CD8-positive, alpha-beta T cell (primary cell): ENCODE measurements at regions of chr6 and their contacts with region 1.

Region 1: DNA sequence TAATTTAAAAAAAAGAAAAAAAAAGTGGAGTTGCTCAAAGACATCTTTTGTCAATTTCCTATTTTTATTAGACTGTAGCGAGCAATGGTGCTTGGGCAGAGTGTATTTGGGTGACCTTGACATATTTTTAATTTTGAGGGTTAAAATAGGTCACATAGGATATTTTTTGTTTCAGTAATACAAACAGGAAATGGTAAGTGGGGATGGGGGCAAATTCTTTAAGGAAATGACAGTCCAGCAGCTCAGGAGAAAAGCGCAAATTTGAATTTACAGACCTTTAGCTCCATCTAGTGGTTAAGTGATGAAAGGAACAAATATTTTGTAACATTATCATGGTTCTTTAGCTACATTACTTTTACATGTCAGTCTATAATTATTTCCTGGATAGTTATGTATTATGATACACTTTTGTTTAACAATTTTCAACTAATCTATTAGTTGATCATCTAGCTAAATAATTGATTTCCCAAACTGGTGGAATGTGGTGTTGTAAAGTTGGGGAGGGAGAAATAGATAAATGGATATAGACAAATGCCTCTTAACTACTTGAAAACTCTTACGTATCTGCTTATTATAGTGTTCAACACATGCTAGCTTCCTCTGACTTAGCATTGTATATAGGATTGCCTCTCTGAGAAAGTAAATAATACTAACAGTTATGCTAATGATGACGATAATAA is 10.0 kb downstream of the CITED2 start:
- DNase-seq: peak in 2 of 9 experiments; percentile 64 to 74
- ATAC-seq: peak; percentile 63
- H3K4me3 ChIP-seq: no peak overlapping the region
- H3K4me3 Mint-ChIP-seq: no peak overlapping the region
- H3K27ac ChIP-seq: no peak overlapping the region
- H3K27ac Mint-ChIP-seq: no peak overlapping the region
- H3K4me1 ChIP-seq: peaks cover 4% of the 10 kb centered on the region
- H3K4me1 Mint-ChIP-seq: peaks cover 46% of the 10 kb centered on the region
- H3K27me3 ChIP-seq: no peaks in the 10 kb centered on the region
- H3K27me3 Mint-ChIP-seq: no peaks in the 10 kb centered on the region
- CTCF ChIP-seq: peak; percentile 97

Region 2: DNA sequence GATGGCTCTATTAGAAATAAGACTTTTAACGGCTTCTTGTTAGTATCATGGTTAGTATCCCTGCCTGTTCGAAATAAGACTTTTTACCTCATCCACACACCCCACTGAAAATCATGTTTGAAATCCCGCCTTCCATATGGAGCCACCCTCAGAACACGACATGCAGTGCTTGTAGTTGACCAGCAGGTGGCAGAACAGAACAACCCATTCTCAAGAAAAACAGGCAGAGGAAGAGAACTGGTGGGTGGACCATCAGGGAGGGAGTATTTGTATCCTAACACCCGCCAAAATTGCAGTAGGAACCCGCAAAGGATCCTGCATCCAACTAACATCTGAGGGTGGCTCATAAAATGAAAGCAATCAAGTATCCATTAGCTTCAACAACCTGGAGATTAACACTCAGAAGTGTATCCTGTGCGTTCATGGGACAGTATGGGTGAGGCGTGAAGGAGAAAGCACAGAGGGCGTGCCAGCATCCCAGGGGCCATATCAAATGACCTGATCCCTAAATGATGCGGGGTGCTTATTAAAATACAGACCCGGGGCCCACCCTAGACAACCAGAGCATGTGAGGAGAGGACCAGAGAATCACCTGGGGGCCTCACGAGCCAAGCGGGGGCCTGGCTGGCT is 775.5 kb before region 1 on chr6:
- CTCF ChIA-PET with region 1: interaction called, 9 read pairs
- POLR2A ChIA-PET with region 1: no interaction called
- intact Hi-C with region 1: loop called in 1 of 2 experiments (anchors 5 kb)
- DNase-seq: peak in 8 of 9 experiments; percentile 24 to 74 (median 50)
- ATAC-seq: peak; percentile 67
- H3K4me3 ChIP-seq: no peak overlapping the region
- H3K4me3 Mint-ChIP-seq: no peak overlapping the region
- H3K27ac ChIP-seq: no peak overlapping the region
- H3K27ac Mint-ChIP-seq: no peak overlapping the region
- H3K4me1 ChIP-seq: peaks cover 10% of the 10 kb centered on the region
- H3K4me1 Mint-ChIP-seq: peaks cover 19% of the 10 kb centered on the region
- H3K27me3 ChIP-seq: no peaks in the 10 kb centered on the region
- H3K27me3 Mint-ChIP-seq: no peaks in the 10 kb centered on the region
- CTCF ChIP-seq: peak; percentile 93

Region 3: GRCh38 chr6:138923561-138923960 is 440.9 kb before region 1 on chr6:
- CTCF ChIA-PET with region 1: no interaction called
- POLR2A ChIA-PET with region 1: no interaction called
- intact Hi-C with region 1: loop called in 1 of 2 experiments (anchors 10 kb)
- DNase-seq: no peak
- ATAC-seq: no peak
- H3K4me3 ChIP-seq: no peak overlapping the region
- H3K4me3 Mint-ChIP-seq: no peak overlapping the region
- H3K27ac ChIP-seq: no peak overlapping the region
- H3K27ac Mint-ChIP-seq: no peak overlapping the region
- H3K4me1 ChIP-seq: no peaks in the 10 kb centered on the region
- H3K4me1 Mint-ChIP-seq: peaks cover 3% of the 10 kb centered on the region
- H3K27me3 ChIP-seq: no peaks in the 10 kb centered on the region
- H3K27me3 Mint-ChIP-seq: no peaks in the 10 kb centered on the region
- CTCF ChIP-seq: no peak

Region 4: GRCh38 chr6:139134817-139135581 is 229.4 kb before region 1 on chr6 and contains the start of gene HECA:
- CTCF ChIA-PET with region 1: interaction called, 16 read pairs
- POLR2A ChIA-PET with region 1: interaction called, 5 read pairs
- intact Hi-C with region 1: no loop called
- DNase-seq: peak; percentile 98 to 100 (median 99)
- ATAC-seq: peak; percentile 81
- H3K4me3 ChIP-seq: peak within 1 kb of the TSS; percentile 79 to 84
- H3K4me3 Mint-ChIP-seq: peak within 1 kb of the TSS; percentile 91
- H3K27ac ChIP-seq: peak within 1 kb of the TSS; percentile 96 to 97
- H3K27ac Mint-ChIP-seq: peak within 1 kb of the TSS; percentile 98
- H3K4me1 ChIP-seq: peaks cover 55% of the 10 kb centered on the region
- H3K4me1 Mint-ChIP-seq: peaks cover 67% of the 10 kb centered on the region
- H3K27me3 ChIP-seq: no peaks in the 10 kb centered on the region
- H3K27me3 Mint-ChIP-seq: no peaks in the 10 kb centered on the region
- CTCF ChIP-seq: no peak
- total RNA-seq, gene HECA: 231 to 234 TPM

Region 5: DNA sequence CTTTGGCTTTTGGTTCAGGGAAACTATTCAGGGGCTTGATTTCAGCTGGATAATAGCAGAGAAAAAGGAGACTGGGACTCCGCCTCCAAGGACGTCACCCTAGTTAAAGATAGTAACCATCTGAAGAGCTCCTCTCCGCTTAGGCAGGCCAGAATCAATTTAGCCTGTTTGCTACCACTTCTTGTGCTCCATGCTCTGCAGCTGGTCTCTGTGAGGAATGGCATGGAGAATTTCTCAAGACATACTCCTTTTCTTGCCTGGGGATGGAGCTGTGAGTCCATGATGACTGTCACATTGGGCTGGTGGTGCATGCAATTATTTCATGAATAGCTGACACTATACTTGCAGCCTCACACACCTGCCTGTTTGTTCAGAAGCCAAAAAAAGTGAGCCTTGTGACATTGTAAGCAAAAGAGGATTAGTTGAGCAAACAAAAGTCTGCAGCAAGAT is 134.0 kb before region 1 on chr6:
- CTCF ChIA-PET with region 1: interaction called, 21 read pairs
- POLR2A ChIA-PET with region 1: interaction called, 3 read pairs
- intact Hi-C with region 1: no loop called
- DNase-seq: peak in 2 of 9 experiments; percentile 17 to 27
- ATAC-seq: no peak
- H3K4me3 ChIP-seq: no peak overlapping the region
- H3K4me3 Mint-ChIP-seq: no peak overlapping the region
- H3K27ac ChIP-seq: no peak overlapping the region
- H3K27ac Mint-ChIP-seq: peak overlapping the region; percentile 10
- H3K4me1 ChIP-seq: no peaks in the 10 kb centered on the region
- H3K4me1 Mint-ChIP-seq: peaks cover 9% of the 10 kb centered on the region
- H3K27me3 ChIP-seq: no peaks in the 10 kb centered on the region
- H3K27me3 Mint-ChIP-seq: no peaks in the 10 kb centered on the region
- CTCF ChIP-seq: no peak

Region 6: GRCh38 chr6:139291813-139292619 is 72.4 kb before region 1 on chr6 and contains the start of gene TXLNB:
- CTCF ChIA-PET with region 1: interaction called, 20 read pairs
- POLR2A ChIA-PET with region 1: interaction called, 6 read pairs
- intact Hi-C with region 1: loop called (anchors 1 to 5 kb)
- DNase-seq: peak; percentile 55 to 92 (median 80)
- ATAC-seq: peak; percentile 85
- H3K4me3 ChIP-seq: peak within 1 kb of the TSS; percentile 16 to 34
- H3K4me3 Mint-ChIP-seq: peak within 1 kb of the TSS; percentile 77
- H3K27ac ChIP-seq: peak within 1 kb of the TSS; percentile 77 to 82
- H3K27ac Mint-ChIP-seq: peak within 1 kb of the TSS; percentile 96
- H3K4me1 ChIP-seq: peaks cover 39% of the 10 kb centered on the region
- H3K4me1 Mint-ChIP-seq: peaks cover 66% of the 10 kb centered on the region
- H3K27me3 ChIP-seq: no peaks in the 10 kb centered on the region
- H3K27me3 Mint-ChIP-seq: no peaks in the 10 kb centered on the region
- CTCF ChIP-seq: no peak
- total RNA-seq, gene TXLNB: 0.22 to 0.72 TPM

Region 7: GRCh38 chr6:139732451-139732850 is 368.0 kb after region 1 on chr6:
- CTCF ChIA-PET with region 1: no interaction called
- POLR2A ChIA-PET with region 1: no interaction called
- intact Hi-C with region 1: no loop called
- DNase-seq: no peak
- ATAC-seq: no peak
- H3K4me3 ChIP-seq: no peak overlapping the region
- H3K4me3 Mint-ChIP-seq: no peak overlapping the region
- H3K27ac ChIP-seq: no peak overlapping the region
- H3K27ac Mint-ChIP-seq: no peak overlapping the region
- H3K4me1 ChIP-seq: no peaks in the 10 kb centered on the region
- H3K4me1 Mint-ChIP-seq: no peaks in the 10 kb centered on the region
- H3K27me3 ChIP-seq: no peaks in the 10 kb centered on the region
- H3K27me3 Mint-ChIP-seq: peaks cover 13% of the 10 kb centered on the region
- CTCF ChIP-seq: no peak